SK-N-SH (cell line): ENCODE measurements at regions of chr5 and their contacts with region 1.

Region 1: DNA sequence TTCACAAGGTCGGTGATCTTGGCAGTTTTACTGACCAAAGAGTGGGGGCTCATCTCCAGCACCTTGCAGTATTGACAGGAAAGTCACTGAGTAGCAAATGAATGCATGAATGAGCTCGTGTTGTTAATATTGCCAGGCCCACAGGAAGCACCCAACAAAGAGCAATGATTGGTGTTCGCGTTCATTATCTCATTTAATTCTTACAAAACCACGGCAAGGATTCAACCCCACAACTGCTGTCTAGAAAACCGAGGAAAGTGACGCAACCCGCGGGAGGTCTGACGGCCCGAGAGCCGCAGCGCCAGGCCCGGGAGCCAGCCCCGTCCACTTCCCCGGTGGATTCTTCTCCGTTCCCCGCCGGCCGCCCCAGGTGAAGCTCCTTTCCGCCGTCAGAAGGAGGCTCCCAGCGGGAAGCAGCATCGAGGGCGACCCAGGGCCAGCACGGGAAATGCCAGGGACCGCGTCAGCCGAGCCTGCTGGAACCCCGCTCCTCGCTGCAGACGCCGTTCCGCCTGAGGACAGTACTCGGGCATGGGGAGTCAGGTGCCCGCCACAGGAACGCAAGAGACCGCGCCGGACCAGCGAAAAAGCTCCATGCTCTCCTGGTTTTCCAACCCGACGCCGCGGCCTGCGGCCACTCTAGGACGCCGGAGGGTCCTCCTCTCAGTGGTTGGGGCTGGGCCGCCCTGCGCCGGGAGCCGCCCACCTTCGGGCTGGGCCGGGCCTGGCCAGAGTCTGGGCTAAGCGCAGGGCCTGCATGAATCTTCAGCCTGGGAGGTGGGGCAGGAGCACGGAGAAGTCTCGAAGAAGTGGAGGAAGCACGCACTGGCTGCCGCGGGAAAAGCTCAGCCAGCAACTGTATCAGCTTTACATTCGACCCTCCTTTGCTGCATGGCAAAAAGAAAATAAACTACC is 19.8 kb upstream of the FER start:
- DNase-seq: peak; percentile 94
- H3K4me3 ChIP-seq: peak overlapping the region; percentile 77 to 83
- H3K27ac ChIP-seq: peak overlapping the region; percentile 71 to 92
- H3K4me1 ChIP-seq: peaks cover 6 to 13% of the 10 kb centered on the region in 2 experiments; a peak in 3 of 4 replicates
- H3K27me3 ChIP-seq: no peaks in the 10 kb centered on the region
- CTCF ChIP-seq: no peak
- EP300 ChIP-seq: peak in 1 of 2 experiments; percentile 24; a peak in 1 of 4 replicates
- RAD21 ChIP-seq: no peak

Region 2: GRCh38 chr5:108681079-108681921 is 46.6 kb before region 1 on chr5:
- CTCF ChIA-PET with region 1: interaction called, 10 read pairs
- POLR2A ChIA-PET with region 1: no interaction called
- DNase-seq: peak; percentile 62
- H3K4me3 ChIP-seq: no peak overlapping the region; a peak in 1 of 4 replicates
- H3K27ac ChIP-seq: 0 out of 4 replicates have a peak overlapping the region, but pooled peaks of 1 of the 2 experiments have one; percentile 12
- H3K4me1 ChIP-seq: peaks cover 0 to 4% of the 10 kb centered on the region in 2 experiments; a peak in 1 of 4 replicates
- H3K27me3 ChIP-seq: no peaks in the 10 kb centered on the region
- CTCF ChIP-seq: peak; percentile 92
- EP300 ChIP-seq: no peak
- RAD21 ChIP-seq: peak; percentile 89

Region 3: DNA sequence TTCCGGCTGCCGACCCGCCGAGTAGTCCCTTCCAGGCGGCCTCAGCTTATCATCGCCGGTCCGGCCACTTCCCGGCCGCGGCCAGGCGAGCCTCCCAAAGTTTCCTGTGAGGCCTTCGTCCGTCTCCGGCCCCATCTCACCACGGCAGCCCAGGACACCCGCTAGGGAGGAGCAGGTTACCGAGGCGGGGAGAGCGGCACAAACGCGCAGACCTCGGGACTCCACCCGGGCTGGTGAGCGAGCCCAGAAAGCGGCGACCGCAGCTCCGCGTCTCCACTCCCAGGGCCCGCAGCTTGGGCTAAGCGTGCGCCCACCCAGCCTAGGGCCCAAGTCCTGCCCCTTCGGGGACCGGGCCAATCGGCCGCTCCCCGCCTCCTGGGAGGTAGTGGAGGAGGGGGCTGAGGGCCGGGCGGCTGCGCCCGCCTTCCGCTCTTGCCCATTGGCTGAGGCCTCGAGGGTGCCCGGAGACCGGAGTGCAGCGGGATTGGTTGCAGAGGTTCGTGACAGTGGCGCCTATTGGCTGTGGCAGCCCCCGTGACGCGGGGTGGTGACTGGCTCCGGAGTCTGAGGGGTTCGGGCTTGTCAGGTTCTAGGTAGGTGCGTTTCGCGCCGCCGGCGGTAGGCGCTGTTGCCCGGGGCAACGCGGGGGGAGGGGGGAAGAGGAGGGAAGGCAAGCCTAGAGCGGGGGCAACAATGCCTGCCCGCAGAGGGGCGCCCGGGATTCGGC is 20.7 kb after region 1 on chr5:
- CTCF ChIA-PET with region 1: interaction called, 4 read pairs
- POLR2A ChIA-PET with region 1: interaction called, 24 read pairs
- DNase-seq: peak; percentile 97
- H3K4me3 ChIP-seq: peak overlapping the region; percentile 71 to 83
- H3K27ac ChIP-seq: peak overlapping the region; percentile 97
- H3K4me1 ChIP-seq: peaks cover 8 to 23% of the 10 kb centered on the region in 2 experiments; a peak in 3 of 4 replicates
- H3K27me3 ChIP-seq: no peaks in the 10 kb centered on the region
- CTCF ChIP-seq: peak; percentile 29; the same call in 1 of the 2 replicates
- EP300 ChIP-seq: no peak; a peak in 1 of 4 replicates
- RAD21 ChIP-seq: peak; percentile 10; the same call in 1 of the 2 replicates

Region 4: DNA sequence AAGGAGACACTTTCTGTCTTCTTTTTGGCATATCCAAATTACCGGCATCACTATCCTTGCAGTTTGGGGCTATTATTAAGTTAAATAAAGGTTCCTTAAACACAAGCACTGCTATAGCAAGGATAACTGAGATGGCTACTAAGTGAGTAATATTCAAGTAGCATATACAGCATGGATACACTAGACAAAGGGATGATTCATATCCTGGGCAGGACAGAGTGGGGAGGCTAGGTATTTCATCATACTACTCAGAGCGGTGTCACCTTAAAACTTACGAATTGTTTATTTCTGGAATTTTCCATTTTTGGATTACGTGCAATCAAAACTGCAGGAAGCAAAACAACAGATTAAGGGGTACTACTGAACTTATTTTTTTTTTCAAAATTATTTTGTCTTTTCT is 73.9 kb after region 1 on chr5:
- CTCF ChIA-PET with region 1: no interaction called
- POLR2A ChIA-PET with region 1: no interaction called
- DNase-seq: no peak
- H3K4me3 ChIP-seq: no peak overlapping the region
- H3K27ac ChIP-seq: peak overlapping the region; percentile 17 to 89
- H3K4me1 ChIP-seq: peaks cover 0 to 8% of the 10 kb centered on the region in 2 experiments; a peak in 2 of 4 replicates
- H3K27me3 ChIP-seq: no peaks in the 10 kb centered on the region
- CTCF ChIP-seq: no peak
- EP300 ChIP-seq: peak in 1 of 2 experiments; percentile 52; a peak in 1 of 4 replicates
- RAD21 ChIP-seq: no peak

Region 5: GRCh38 chr5:109409844-109410388 is 682.0 kb after region 1 on chr5 and contains the start of gene PJA2:
- CTCF ChIA-PET with region 1: no interaction called
- POLR2A ChIA-PET with region 1: interaction called, 10 read pairs
- DNase-seq: peak; percentile 91
- H3K4me3 ChIP-seq: peak within 1 kb of the TSS; percentile 93 to 96
- H3K27ac ChIP-seq: peak within 1 kb of the TSS; percentile 98 to 99
- H3K4me1 ChIP-seq: peaks cover 13 to 25% of the 10 kb centered on the region in 2 experiments
- H3K27me3 ChIP-seq: no peaks in the 10 kb centered on the region
- CTCF ChIP-seq: peak; percentile 9; the same call in 1 of the 2 replicates
- EP300 ChIP-seq: peak; percentile 28 to 40; a peak in 2 of 4 replicates
- RAD21 ChIP-seq: peak; percentile 31
- polyA plus RNA-seq, gene PJA2: 30.7 and 39.6 TPM in 2 replicates